BJ (cell line): ENCODE measurements at regions of chr1 and their contacts with region 1.

Region 1: DNA sequence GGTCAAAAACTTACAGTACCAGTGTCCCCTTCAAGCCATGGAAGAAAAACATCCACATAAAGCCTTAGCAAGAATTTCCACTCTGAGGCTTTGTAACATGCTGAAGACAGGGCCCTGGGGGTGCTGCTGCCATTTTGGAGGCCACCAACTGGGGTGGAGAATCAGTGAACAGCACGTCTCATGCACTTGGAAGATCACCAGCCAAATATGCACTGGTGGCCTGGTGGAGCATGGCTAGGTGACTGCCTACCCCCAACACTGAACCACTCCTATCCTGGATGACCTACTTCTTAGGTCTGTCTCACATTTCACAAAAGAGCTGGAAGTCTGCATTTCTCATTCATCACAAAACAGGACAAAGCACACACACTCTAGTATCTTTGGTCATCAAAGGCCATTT is 126.4 kb downstream of the COL24A1 start:
- DNase-seq: no peak
- H3K4me3 ChIP-seq: no peak overlapping the region
- H3K27me3 ChIP-seq: no peaks in the 10 kb centered on the region
- CTCF ChIP-seq: no peak

Region 2: DNA sequence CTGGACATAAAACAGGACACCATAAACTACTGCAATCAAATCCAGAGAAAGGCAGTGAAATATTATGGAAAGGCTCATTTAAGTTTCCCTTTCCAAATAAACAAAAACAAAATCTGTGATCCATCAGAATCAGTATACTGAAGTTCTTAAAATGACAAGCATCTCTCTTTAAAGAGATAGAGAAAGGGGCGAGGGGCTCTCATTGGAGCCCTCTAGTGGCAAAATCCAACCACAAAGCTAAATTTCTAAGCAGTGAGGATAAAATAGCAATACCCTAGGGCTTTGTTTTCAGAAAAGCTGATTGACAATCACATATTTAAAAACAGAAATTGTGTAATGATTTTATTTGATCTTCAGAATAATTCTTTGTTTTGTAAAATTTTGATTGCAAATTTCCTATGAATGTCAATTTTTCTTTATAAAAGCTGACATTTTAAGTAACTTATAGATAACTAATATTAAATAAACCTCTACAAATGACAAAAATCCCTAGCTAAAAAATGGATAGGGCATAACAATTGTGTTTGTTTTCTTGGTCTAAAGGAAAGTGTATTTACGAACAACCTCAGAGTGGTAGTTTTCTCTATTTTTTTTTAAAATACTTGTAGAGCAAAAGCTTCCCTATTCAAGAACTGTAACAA is 11.8 kb before region 1 on chr1:
- CTCF ChIA-PET with region 1: interaction called, 16 read pairs
- POLR2A ChIA-PET with region 1: no interaction called
- DNase-seq: peak; percentile 9
- H3K4me3 ChIP-seq: no peak overlapping the region
- H3K27me3 ChIP-seq: no peaks in the 10 kb centered on the region
- CTCF ChIP-seq: peak; percentile 89

Region 3: DNA sequence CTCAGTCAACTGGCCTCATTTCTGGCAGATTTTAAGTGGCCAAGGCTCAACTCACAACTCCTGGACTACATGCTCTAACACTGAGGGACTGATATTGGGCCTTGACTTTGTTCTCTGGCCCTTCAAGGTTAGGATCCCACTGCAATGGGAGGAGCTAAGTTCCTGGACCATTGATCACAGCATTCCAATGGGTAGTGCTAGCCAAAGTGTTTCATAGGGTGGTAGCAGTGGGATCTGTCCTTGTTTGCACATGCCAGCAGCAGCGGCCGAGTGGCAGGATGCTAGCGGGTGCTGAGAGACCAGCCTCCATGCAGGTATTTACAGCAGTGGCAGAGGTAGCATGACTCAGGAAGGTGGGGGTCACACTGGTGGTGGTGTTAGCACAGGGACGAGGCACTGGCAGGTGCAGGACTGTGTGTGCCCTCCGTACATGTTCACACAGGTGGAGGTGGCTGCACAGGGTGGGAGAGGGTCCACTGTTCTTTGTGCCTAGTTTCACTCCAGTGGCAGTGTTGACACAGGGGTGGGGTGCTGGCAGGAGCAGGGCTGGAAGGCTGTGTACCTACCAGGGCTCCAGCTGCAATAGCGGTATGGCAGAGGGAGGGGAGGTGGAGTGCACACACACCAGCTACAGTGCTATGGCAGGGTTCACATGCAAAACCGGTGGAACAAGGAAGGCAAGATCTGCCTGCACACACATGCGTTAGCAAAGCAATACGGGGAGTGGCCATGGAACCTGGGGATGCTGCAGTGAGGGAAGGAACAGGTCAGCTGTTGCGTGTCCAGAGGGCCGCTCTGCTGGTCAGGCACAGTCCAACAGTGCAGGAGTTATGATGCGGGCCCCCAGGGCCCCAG is 74.7 kb after region 1 on chr1:
- CTCF ChIA-PET with region 1: no interaction called
- POLR2A ChIA-PET with region 1: no interaction called
- DNase-seq: no peak
- H3K4me3 ChIP-seq: no peak overlapping the region
- H3K27me3 ChIP-seq: no peaks in the 10 kb centered on the region
- CTCF ChIP-seq: no peak